Prostate gland (tissue), 2 donors: ENCODE measurements at regions of chr10 and their contacts with region 1.

Region 1: GRCh38 chr10:122565728-122566206 is 5.2 kb downstream of the DMBT1 start:
- DNase-seq: peak; percentile 72
- H3K4me3 ChIP-seq: no peak overlapping the region
- H3K27ac ChIP-seq: no peak overlapping the region
- H3K4me1 ChIP-seq: no peaks in the 10 kb centered on the region
- H3K27me3 ChIP-seq: no peaks in the 10 kb centered on the region
- CTCF ChIP-seq: peak in 3 of 4 experiments; percentile 70 to 82 (median 81)
- POLR2A ChIP-seq: no peak

Region 2: GRCh38 chr10:122298598-122299301 is 267.0 kb before region 1 on chr10:
- intact Hi-C with region 1: loop called (anchors 2 kb)
- DNase-seq: peak; percentile 53
- H3K4me3 ChIP-seq: no peak overlapping the region
- H3K27ac ChIP-seq: no peak overlapping the region
- H3K4me1 ChIP-seq: no peaks in the 10 kb centered on the region
- H3K27me3 ChIP-seq: no peaks in the 10 kb centered on the region
- CTCF ChIP-seq: peak; percentile 83 to 92 (median 88)
- POLR2A ChIP-seq: no peak

Region 3: DNA sequence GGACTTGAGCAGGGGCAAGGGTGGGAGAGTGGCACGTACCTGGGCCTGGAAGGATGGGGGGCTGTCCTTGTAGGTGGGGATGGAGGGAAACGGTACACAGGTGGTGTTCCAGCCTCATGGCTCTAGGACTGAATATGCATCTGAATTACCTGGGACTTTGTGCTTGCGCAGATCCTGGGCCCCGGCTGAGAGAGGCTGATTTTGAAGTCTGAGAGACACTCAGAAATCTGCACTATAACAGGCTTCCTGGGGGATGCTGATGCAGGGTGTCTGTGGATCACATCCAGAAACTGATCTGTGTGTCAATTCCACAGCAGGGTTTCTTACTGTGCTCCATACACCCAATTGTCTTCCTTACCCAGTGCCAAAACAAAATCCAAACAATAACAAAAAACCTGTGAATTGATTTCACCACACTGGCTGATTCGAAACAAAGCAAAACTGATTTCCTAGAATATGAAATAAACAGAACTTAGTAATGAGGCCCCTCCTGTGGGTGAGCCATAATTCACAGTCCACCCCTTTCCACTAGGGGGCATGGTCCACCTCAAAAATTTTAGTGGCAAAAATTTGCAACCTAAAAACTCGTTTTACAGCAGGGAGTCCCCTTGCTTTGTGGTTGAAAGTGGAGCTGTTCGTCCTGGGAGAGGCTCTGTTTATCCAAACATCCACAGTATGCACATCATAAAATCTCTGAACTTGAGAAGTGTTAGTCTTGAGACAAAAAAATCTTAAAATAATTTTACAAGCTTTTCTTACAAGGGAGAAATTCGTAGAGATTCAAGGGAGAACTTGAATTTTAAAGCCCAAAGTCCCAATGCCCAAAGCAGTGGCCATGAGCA is 223.3 kb before region 1 on chr10:
- intact Hi-C with region 1: loop called (anchors 5 kb)
- DNase-seq: peak; percentile 28
- H3K4me3 ChIP-seq: no peak overlapping the region
- H3K27ac ChIP-seq: no peak overlapping the region
- H3K4me1 ChIP-seq: no peaks in the 10 kb centered on the region
- H3K27me3 ChIP-seq: no peaks in the 10 kb centered on the region
- CTCF ChIP-seq: peak; percentile 60 to 83 (median 80)
- POLR2A ChIP-seq: no peak

Region 4: DNA sequence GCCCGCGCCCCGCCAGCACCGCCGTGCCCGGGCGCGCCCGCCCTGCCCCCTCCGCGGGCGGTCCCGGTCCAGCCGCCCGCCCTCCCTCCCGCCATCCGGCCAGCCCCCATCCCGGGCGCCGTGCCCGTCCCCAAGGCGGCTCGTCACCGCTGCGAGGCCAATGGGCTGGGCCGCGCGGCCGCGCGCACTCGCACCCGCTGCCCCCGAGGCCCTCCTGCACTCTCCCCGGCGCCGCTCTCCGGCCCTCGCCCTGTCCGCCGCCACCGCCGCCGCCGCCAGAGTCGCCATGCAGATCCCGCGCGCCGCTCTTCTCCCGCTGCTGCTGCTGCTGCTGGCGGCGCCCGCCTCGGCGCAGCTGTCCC is 104.4 kb before region 1 on chr10 and contains the start of gene HTRA1:
- intact Hi-C with region 1: loop called (anchors 10 kb)
- DNase-seq: peak; percentile 64
- H3K4me3 ChIP-seq: peak within 1 kb of the TSS; percentile 51 to 55
- H3K27ac ChIP-seq: peak within 1 kb of the TSS; percentile 77 to 81
- H3K4me1 ChIP-seq: peaks cover 7% of the 10 kb centered on the region
- H3K27me3 ChIP-seq: no peaks in the 10 kb centered on the region
- CTCF ChIP-seq: no peak
- POLR2A ChIP-seq: no peak
- total RNA-seq, gene HTRA1: 41.4 to 61.8 TPM